Activated B cell treated with CpG ODN at 0.5 μM for 24 hours (primary cell): ENCODE measurements at regions of chr14 and their contacts with region 1.

Region 1: GRCh38 chr14:101843665-101844064 is 82.2 kb downstream of the PPP2R5C start:
- DNase-seq: peak; percentile 48
- ATAC-seq: peak; percentile 79
- H3K4me3 Mint-ChIP-seq: peak overlapping the region; percentile 76
- H3K27ac Mint-ChIP-seq: peak overlapping the region; percentile 94
- H3K4me1 Mint-ChIP-seq: peaks cover 83% of the 10 kb centered on the region
- H3K27me3 Mint-ChIP-seq: no peaks in the 10 kb centered on the region
- CTCF ChIP-seq: peak; percentile 26

Region 2: GRCh38 chr14:101584055-101584859 is 259.4 kb before region 1 on chr14:
- CTCF ChIA-PET with region 1: no interaction called
- POLR2A ChIA-PET with region 1: no interaction called
- intact Hi-C with region 1: no loop called
- DNase-seq: no peak
- ATAC-seq: no peak
- H3K4me3 Mint-ChIP-seq: no peak overlapping the region
- H3K27ac Mint-ChIP-seq: no peak overlapping the region
- H3K4me1 Mint-ChIP-seq: no peaks in the 10 kb centered on the region
- H3K27me3 Mint-ChIP-seq: no peaks in the 10 kb centered on the region
- CTCF ChIP-seq: no peak

Region 3: GRCh38 chr14:101767618-101768362 is 75.9 kb before region 1 on chr14:
- CTCF ChIA-PET with region 1: interaction called, 80 read pairs
- POLR2A ChIA-PET with region 1: interaction called, 27 read pairs
- intact Hi-C with region 1: loop called (anchors 1 kb)
- DNase-seq: no peak
- ATAC-seq: no peak
- H3K4me3 Mint-ChIP-seq: no peak overlapping the region
- H3K27ac Mint-ChIP-seq: no peak overlapping the region
- H3K4me1 Mint-ChIP-seq: peaks cover 11% of the 10 kb centered on the region
- H3K27me3 Mint-ChIP-seq: no peaks in the 10 kb centered on the region
- CTCF ChIP-seq: no peak

Region 4: DNA sequence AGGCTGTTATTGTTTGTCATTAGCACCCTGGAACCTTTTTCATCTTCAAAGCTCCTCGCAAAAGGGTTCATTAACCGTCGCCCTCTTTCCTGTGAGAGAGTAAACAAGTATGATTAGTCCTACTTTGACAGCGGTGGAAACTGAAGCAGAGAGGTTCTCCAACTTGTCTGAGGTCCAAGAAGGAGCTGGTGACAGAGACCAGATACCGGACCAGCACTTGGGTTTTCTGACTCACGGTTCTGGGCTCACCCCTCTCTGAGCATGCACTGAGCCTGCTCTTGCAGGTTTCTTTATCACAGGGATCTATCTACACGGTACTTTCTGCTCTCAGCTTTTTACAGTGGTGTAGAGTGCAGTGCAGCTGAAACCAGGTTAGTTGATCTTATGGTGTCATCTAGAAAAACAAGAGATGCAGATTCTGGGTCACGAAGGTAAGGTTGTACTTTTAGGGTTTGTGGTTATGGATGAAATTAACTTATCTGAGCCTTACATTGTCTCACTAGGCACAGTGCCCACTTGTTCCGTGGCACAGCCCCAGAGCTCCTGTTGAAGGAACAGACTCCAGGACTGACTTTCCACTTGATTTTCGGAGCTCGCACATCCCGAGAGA is 20.0 kb before region 1 on chr14:
- CTCF ChIA-PET with region 1: interaction called, 11 read pairs
- POLR2A ChIA-PET with region 1: interaction called, 80 read pairs
- intact Hi-C with region 1: loop called (anchors 1 kb)
- DNase-seq: no peak
- ATAC-seq: peak; percentile 31
- H3K4me3 Mint-ChIP-seq: peak overlapping the region; percentile 80
- H3K27ac Mint-ChIP-seq: peak overlapping the region; percentile 99
- H3K4me1 Mint-ChIP-seq: peaks cover 91% of the 10 kb centered on the region
- H3K27me3 Mint-ChIP-seq: no peaks in the 10 kb centered on the region
- CTCF ChIP-seq: no peak

Region 5: DNA sequence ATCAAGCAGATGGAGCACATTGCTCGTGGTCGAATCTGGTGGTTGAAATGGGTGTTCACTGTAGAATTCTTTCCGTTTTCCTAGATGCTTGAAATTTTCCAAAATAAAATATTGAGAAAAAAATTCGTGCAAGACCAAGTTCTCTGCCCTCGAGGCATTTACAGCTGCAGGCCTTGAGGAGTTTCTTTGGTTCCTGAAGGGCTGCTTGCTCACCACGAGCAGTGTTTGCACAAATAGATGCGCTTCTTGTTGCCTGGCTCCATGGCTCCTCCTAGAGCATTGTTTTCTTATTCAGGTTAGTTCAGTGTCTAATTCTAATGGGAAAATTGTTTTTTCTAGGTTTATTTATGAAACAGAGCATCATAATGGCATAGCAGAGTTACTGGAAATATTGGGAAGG is 46.2 kb after region 1 on chr14:
- CTCF ChIA-PET with region 1: interaction called, 4 read pairs
- POLR2A ChIA-PET with region 1: interaction called, 4 read pairs
- intact Hi-C with region 1: loop called (anchors 1 kb)
- DNase-seq: no peak
- ATAC-seq: no peak
- H3K4me3 Mint-ChIP-seq: no peak overlapping the region
- H3K27ac Mint-ChIP-seq: peak overlapping the region; percentile 35
- H3K4me1 Mint-ChIP-seq: no peaks in the 10 kb centered on the region
- H3K27me3 Mint-ChIP-seq: no peaks in the 10 kb centered on the region
- CTCF ChIP-seq: no peak

Region 6: GRCh38 chr14:101992708-101993107 is 149.0 kb after region 1 on chr14:
- CTCF ChIA-PET with region 1: no interaction called
- POLR2A ChIA-PET with region 1: no interaction called
- intact Hi-C with region 1: loop called (anchors 1 kb)
- DNase-seq: peak; percentile 25
- ATAC-seq: peak; percentile 95
- H3K4me3 Mint-ChIP-seq: no peak overlapping the region
- H3K27ac Mint-ChIP-seq: peak overlapping the region; percentile 59
- H3K4me1 Mint-ChIP-seq: peaks cover 23% of the 10 kb centered on the region
- H3K27me3 Mint-ChIP-seq: no peaks in the 10 kb centered on the region
- CTCF ChIP-seq: no peak

Region 7: DNA sequence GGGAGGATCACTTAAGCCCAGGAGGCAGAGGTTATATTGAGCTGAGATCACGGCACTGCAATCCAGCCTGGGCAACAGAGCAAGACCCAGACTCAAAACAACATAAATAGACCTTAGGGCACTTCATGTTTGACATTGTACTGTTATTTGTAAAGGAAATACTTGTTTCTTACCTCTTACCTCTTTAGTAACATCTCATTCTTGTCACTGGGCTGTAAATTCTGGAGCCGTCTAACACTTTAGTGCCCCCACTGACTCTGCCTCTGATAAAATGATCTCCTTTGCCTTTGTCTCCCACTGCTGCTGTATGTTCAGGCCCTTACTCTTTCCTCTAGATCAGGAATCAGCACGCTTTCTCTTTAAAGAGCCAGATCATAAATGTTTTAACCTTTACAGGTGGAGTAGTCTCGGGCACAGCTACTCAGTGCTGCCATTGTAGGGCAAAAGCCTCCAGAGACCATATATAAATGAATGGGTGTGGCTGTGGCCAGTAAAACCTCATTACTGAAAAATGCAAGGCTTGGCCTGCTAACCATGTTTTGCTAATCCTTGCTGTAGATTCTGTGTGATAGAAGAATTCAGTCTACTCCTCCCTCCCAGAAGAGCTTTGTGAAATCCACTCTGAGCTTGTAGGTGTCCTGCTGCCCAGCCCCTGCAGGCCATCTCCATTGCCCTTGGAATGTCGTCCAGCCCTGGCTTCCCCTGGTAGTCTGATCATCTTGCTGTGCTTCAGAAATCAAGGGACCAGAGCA is 184.9 kb after region 1 on chr14:
- CTCF ChIA-PET with region 1: no interaction called
- POLR2A ChIA-PET with region 1: no interaction called
- intact Hi-C with region 1: no loop called
- DNase-seq: no peak
- ATAC-seq: no peak
- H3K4me3 Mint-ChIP-seq: no peak overlapping the region
- H3K27ac Mint-ChIP-seq: no peak overlapping the region
- H3K4me1 Mint-ChIP-seq: no peaks in the 10 kb centered on the region
- H3K27me3 Mint-ChIP-seq: no peaks in the 10 kb centered on the region
- CTCF ChIP-seq: no peak